Caco-2 (cell line): ENCODE measurements at regions of chr4 and their contacts with region 1.

Region 1: GRCh38 chr4:142353149-142353738 is 492.9 kb downstream of the INPP4B start:
- DNase-seq: peak in 1 of 2 experiments; percentile 36
- H3K4me3 ChIP-seq: no peak overlapping the region
- H3K4me3 Mint-ChIP-seq: no peak overlapping the region
- H3K27ac Mint-ChIP-seq: no peak overlapping the region
- H3K4me1 ChIP-seq: peaks cover 77% of the 10 kb centered on the region
- H3K4me1 Mint-ChIP-seq: peaks cover 25% of the 10 kb centered on the region
- H3K27me3 ChIP-seq: no peaks in the 10 kb centered on the region
- H3K27me3 Mint-ChIP-seq: no peaks in the 10 kb centered on the region
- CTCF ChIP-seq: peak; percentile 61 to 67

Region 2: DNA sequence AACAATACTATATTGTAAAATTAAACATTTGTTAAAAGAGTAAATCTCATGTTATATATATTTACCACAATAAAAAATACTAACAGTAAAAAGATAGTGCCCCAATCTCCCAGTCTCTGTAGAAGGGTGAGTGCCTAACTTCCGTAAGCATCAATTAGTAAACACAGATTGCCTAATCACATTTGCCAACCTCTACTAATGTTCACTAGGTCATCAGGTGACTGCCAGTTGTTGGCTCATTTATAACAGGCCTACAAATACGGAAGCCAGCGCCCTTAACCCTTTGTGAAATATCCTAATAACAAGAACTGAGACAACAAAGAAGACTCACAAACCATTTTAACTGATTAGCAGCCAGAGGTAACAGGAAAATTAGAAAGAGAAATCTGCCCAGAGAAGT is 147.7 kb after region 1 on chr4:
- CTCF ChIA-PET with region 1: no interaction called
- POLR2A ChIA-PET with region 1: no interaction called
- intact Hi-C with region 1: loop called (anchors 10 kb)
- DNase-seq: no peak
- H3K4me3 ChIP-seq: no peak overlapping the region
- H3K4me3 Mint-ChIP-seq: no peak overlapping the region
- H3K27ac Mint-ChIP-seq: no peak overlapping the region
- H3K4me1 ChIP-seq: peaks cover 29% of the 10 kb centered on the region
- H3K4me1 Mint-ChIP-seq: peaks cover 6% of the 10 kb centered on the region
- H3K27me3 ChIP-seq: no peaks in the 10 kb centered on the region
- H3K27me3 Mint-ChIP-seq: no peaks in the 10 kb centered on the region
- CTCF ChIP-seq: no peak

Region 3: DNA sequence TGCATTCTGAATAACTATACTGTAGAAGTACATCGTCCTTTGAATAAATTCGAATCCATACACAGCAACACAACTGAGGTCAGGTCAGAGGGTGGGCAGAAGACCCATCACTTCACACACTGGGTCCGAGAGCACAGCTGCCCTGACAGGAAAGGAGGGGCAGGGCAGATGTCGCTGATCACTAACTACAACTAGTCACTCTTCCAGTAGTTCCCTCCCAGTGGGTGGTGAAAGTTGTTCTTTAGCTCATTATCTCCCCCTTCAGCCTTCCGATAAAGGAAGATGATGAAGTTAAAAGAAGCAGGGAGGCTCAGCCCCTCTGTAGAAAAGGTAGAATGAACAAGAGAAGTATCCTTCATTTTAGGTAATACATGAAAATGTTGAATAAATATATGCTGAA is 214.0 kb after region 1 on chr4:
- CTCF ChIA-PET with region 1: no interaction called
- POLR2A ChIA-PET with region 1: no interaction called
- intact Hi-C with region 1: loop called (anchors 1 kb)
- DNase-seq: peak; percentile 45 to 49
- H3K4me3 ChIP-seq: no peak overlapping the region
- H3K4me3 Mint-ChIP-seq: peak overlapping the region; percentile 68
- H3K27ac Mint-ChIP-seq: no peak overlapping the region
- H3K4me1 ChIP-seq: peaks cover 42% of the 10 kb centered on the region
- H3K4me1 Mint-ChIP-seq: peaks cover 19% of the 10 kb centered on the region
- H3K27me3 ChIP-seq: no peaks in the 10 kb centered on the region
- H3K27me3 Mint-ChIP-seq: no peaks in the 10 kb centered on the region
- CTCF ChIP-seq: peak in 1 of 2 experiments; percentile 27

Region 4: GRCh38 chr4:142719854-142720541 is 366.8 kb after region 1 on chr4:
- CTCF ChIA-PET with region 1: interaction called, 4 read pairs
- POLR2A ChIA-PET with region 1: no interaction called
- intact Hi-C with region 1: loop called (anchors 1 kb)
- DNase-seq: peak in 1 of 2 experiments; percentile 21
- H3K4me3 ChIP-seq: no peak overlapping the region
- H3K4me3 Mint-ChIP-seq: no peak overlapping the region
- H3K27ac Mint-ChIP-seq: no peak overlapping the region
- H3K4me1 ChIP-seq: no peaks in the 10 kb centered on the region
- H3K4me1 Mint-ChIP-seq: no peaks in the 10 kb centered on the region
- H3K27me3 ChIP-seq: no peaks in the 10 kb centered on the region
- H3K27me3 Mint-ChIP-seq: no peaks in the 10 kb centered on the region
- CTCF ChIP-seq: peak in 1 of 2 experiments; percentile 37

Region 5: GRCh38 chr4:142840516-142841123 is 487.4 kb after region 1 on chr4:
- CTCF ChIA-PET with region 1: no interaction called
- POLR2A ChIA-PET with region 1: no interaction called
- intact Hi-C with region 1: loop called (anchors 1 kb)
- DNase-seq: no peak
- H3K4me3 ChIP-seq: no peak overlapping the region
- H3K4me3 Mint-ChIP-seq: no peak overlapping the region
- H3K27ac Mint-ChIP-seq: no peak overlapping the region
- H3K4me1 ChIP-seq: no peaks in the 10 kb centered on the region
- H3K4me1 Mint-ChIP-seq: no peaks in the 10 kb centered on the region
- H3K27me3 ChIP-seq: no peaks in the 10 kb centered on the region
- H3K27me3 Mint-ChIP-seq: peaks cover 12% of the 10 kb centered on the region
- CTCF ChIP-seq: peak; percentile 56 to 58

Region 6: GRCh38 chr4:142846729-142847596 is 493.7 kb after region 1 on chr4:
- CTCF ChIA-PET with region 1: no interaction called
- POLR2A ChIA-PET with region 1: no interaction called
- intact Hi-C with region 1: loop called (anchors 2 kb)
- DNase-seq: peak; percentile 57 to 65
- H3K4me3 ChIP-seq: peak overlapping the region; percentile 31
- H3K4me3 Mint-ChIP-seq: peak overlapping the region; percentile 74
- H3K27ac Mint-ChIP-seq: no peak overlapping the region
- H3K4me1 ChIP-seq: peaks cover 4% of the 10 kb centered on the region; the same call in 1 of the 2 replicates
- H3K4me1 Mint-ChIP-seq: no peaks in the 10 kb centered on the region
- H3K27me3 ChIP-seq: 0 out of 2 replicates have a peak, but pooled peaks cover 1% of the 10 kb centered on the region
- H3K27me3 Mint-ChIP-seq: peaks cover 24% of the 10 kb centered on the region
- CTCF ChIP-seq: peak; percentile 61